GM12878 (cell line): ENCODE measurements at regions of chr7 and their contacts with region 1.

Region 1: GRCh38 chr7:124784879-124785818 is 19.6 kb upstream of the GPR37 start:
- DNase-seq: no peak
- ATAC-seq: peak; percentile 77
- H3K4me3 ChIP-seq: no peak overlapping the region
- H3K27ac ChIP-seq: no peak overlapping the region
- H3K4me1 ChIP-seq: no peaks in the 10 kb centered on the region
- H3K27me3 ChIP-seq: no peaks in the 10 kb centered on the region; a peak in 1 of 4 replicates
- CTCF ChIP-seq: peak; percentile 67 to 75 (median 70)
- EP300 ChIP-seq: no peak
- POLR2A ChIP-seq: no peak
- RAD21 ChIP-seq: peak; percentile 95

Region 2: GRCh38 chr7:124101173-124101768 is 683.9 kb before region 1 on chr7:
- CTCF ChIA-PET with region 1: interaction called, 18 read pairs
- POLR2A ChIA-PET with region 1: no interaction called
- RAD21 ChIA-PET with region 1: interaction called, 18 read pairs
- SMC1A ChIA-PET with region 1: interaction called, 15 read pairs
- in situ Hi-C with region 1: no loop called
- intact Hi-C with region 1: loop called (anchors 2 kb)
- DNase-seq: no peak
- ATAC-seq: no peak
- H3K4me3 ChIP-seq: no peak overlapping the region
- H3K27ac ChIP-seq: no peak overlapping the region
- H3K4me1 ChIP-seq: no peaks in the 10 kb centered on the region
- H3K27me3 ChIP-seq: no peaks in the 10 kb centered on the region
- CTCF ChIP-seq: peak; percentile 21 to 34 (median 26); a peak in 3 of 6 replicates
- EP300 ChIP-seq: no peak
- POLR2A ChIP-seq: no peak
- RAD21 ChIP-seq: peak; percentile 47; the same call in 1 of the 2 replicates

Region 3: DNA sequence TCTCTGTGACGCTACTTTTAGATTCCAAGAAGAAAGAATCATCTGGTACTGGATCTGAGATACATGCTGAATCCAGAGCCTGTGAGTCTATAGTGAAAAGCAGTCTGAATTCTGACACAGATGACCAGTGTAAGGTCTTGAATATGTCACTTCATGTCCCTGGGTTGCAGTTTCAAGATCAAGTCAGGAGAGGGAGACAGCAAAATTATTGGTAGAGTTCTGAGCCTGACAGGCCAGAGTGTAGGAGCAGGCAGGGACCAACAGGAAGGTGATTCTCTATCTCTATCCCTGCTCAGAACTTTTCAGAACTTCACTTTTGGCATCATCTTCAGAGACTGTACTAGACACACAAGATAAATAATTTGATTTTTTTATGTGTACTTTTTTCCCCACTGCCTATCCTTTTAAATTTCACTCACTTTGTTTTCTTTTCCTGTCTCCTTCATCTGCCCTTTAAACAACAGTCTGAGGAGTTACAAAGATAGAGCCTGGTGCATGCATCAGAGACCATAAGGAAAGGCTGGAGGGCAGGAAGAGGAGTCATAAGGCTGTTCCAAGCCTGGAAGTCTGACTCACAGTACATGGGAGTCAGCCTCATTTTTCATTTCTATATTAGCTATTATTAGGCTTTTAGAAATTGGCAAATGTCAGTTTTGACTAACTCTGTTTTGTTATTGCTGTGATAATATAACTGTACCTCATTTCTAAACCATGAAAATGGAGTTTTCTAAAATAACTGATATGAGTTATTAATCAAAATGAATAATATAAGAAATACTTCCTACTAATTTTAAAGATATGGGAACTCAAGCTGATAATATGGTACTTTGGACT is 632.1 kb before region 1 on chr7:
- CTCF ChIA-PET with region 1: interaction called, 37 read pairs
- POLR2A ChIA-PET with region 1: no interaction called
- RAD21 ChIA-PET with region 1: interaction called, 8 read pairs
- SMC1A ChIA-PET with region 1: interaction called, 10 read pairs
- in situ Hi-C with region 1: no loop called
- intact Hi-C with region 1: loop called (anchors 2 kb)
- DNase-seq: no peak
- ATAC-seq: peak; percentile 88
- H3K4me3 ChIP-seq: no peak overlapping the region
- H3K27ac ChIP-seq: no peak overlapping the region
- H3K4me1 ChIP-seq: no peaks in the 10 kb centered on the region
- H3K27me3 ChIP-seq: no peaks in the 10 kb centered on the region
- CTCF ChIP-seq: peak; percentile 34 to 44 (median 40); a peak in 4 of 6 replicates
- EP300 ChIP-seq: no peak
- POLR2A ChIP-seq: no peak
- RAD21 ChIP-seq: peak; percentile 49

Region 4: DNA sequence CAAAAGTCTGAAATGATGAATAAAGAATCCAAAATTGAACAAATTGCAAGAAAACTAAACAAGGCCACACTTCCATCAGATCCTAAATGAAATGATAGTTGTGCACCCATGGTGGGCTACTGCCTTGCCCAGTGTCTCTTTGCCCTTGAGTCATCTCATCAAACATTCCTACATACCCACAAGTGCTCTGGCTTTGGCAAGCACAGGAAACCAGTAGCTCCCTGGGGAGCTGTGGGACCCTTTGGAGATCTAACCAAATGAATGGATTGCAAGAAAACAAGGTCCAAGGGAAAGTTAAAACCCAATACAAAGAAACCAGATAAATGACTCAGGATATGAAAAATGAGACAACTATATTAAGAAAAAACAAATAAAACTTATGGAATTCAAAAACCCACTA is 622.5 kb before region 1 on chr7:
- CTCF ChIA-PET with region 1: interaction called, 3 read pairs
- POLR2A ChIA-PET with region 1: no interaction called
- RAD21 ChIA-PET with region 1: no interaction called
- SMC1A ChIA-PET with region 1: interaction called, 3 read pairs
- in situ Hi-C with region 1: loop called (anchors 10 kb)
- intact Hi-C with region 1: no loop called
- DNase-seq: no peak
- ATAC-seq: no peak
- H3K4me3 ChIP-seq: no peak overlapping the region
- H3K27ac ChIP-seq: no peak overlapping the region
- H3K4me1 ChIP-seq: no peaks in the 10 kb centered on the region
- H3K27me3 ChIP-seq: no peaks in the 10 kb centered on the region
- CTCF ChIP-seq: no peak
- EP300 ChIP-seq: no peak
- POLR2A ChIP-seq: no peak
- RAD21 ChIP-seq: no peak

Region 5: GRCh38 chr7:124171068-124171467 is 614.1 kb before region 1 on chr7:
- CTCF ChIA-PET with region 1: interaction called, 18 read pairs
- POLR2A ChIA-PET with region 1: no interaction called
- RAD21 ChIA-PET with region 1: interaction called, 4 read pairs
- SMC1A ChIA-PET with region 1: interaction called, 5 read pairs
- in situ Hi-C with region 1: loop called (anchors 10 kb)
- intact Hi-C with region 1: loop called (anchors 1 kb)
- DNase-seq: no peak
- ATAC-seq: peak; percentile 55; the same call in 1 of the 3 replicates
- H3K4me3 ChIP-seq: no peak overlapping the region
- H3K27ac ChIP-seq: no peak overlapping the region
- H3K4me1 ChIP-seq: no peaks in the 10 kb centered on the region
- H3K27me3 ChIP-seq: no peaks in the 10 kb centered on the region
- CTCF ChIP-seq: peak; percentile 4 to 42 (median 35); a peak in 4 of 6 replicates
- EP300 ChIP-seq: no peak
- POLR2A ChIP-seq: no peak
- RAD21 ChIP-seq: peak; percentile 75

Region 6: DNA sequence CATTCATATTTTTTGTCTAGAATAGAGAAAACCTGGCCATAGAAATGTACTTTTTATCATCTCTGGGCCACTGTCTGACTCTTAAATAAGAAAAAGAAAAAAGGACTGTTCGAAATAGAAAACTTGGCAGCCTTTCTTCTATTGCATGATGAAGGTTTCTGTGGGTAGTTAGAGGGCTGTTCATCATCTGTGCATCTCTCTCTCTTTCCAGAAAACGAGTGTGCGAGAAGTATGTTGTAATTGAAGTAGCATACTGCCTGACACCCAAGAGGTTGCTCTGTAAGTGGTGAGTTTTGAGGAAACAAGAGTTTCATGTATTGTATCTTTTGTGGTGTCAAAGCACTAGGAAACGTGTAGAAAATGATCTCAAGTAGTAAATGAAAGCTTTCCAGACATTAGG is 409.0 kb before region 1 on chr7:
- CTCF ChIA-PET with region 1: no interaction called
- POLR2A ChIA-PET with region 1: no interaction called
- RAD21 ChIA-PET with region 1: no interaction called
- SMC1A ChIA-PET with region 1: no interaction called
- in situ Hi-C with region 1: no loop called
- intact Hi-C with region 1: loop called (anchors 10 kb)
- DNase-seq: no peak
- ATAC-seq: no peak
- H3K4me3 ChIP-seq: no peak overlapping the region
- H3K27ac ChIP-seq: no peak overlapping the region
- H3K4me1 ChIP-seq: no peaks in the 10 kb centered on the region
- H3K27me3 ChIP-seq: no peaks in the 10 kb centered on the region
- CTCF ChIP-seq: no peak
- EP300 ChIP-seq: no peak
- POLR2A ChIP-seq: no peak
- RAD21 ChIP-seq: no peak

Region 7: GRCh38 chr7:124840435-124840834 is 55.3 kb after region 1 on chr7:
- CTCF ChIA-PET with region 1: no interaction called
- POLR2A ChIA-PET with region 1: no interaction called
- RAD21 ChIA-PET with region 1: no interaction called
- SMC1A ChIA-PET with region 1: no interaction called
- in situ Hi-C with region 1: no loop called
- intact Hi-C with region 1: loop called (anchors 10 kb)
- DNase-seq: no peak
- ATAC-seq: no peak
- H3K4me3 ChIP-seq: no peak overlapping the region
- H3K27ac ChIP-seq: no peak overlapping the region
- H3K4me1 ChIP-seq: no peaks in the 10 kb centered on the region
- H3K27me3 ChIP-seq: no peaks in the 10 kb centered on the region
- CTCF ChIP-seq: no peak; a peak in 1 of 6 replicates
- EP300 ChIP-seq: no peak
- POLR2A ChIP-seq: no peak
- RAD21 ChIP-seq: no peak